OCI-LY7 (cell line): ENCODE measurements at regions of chr20 and their contacts with region 1.

Region 1: DNA sequence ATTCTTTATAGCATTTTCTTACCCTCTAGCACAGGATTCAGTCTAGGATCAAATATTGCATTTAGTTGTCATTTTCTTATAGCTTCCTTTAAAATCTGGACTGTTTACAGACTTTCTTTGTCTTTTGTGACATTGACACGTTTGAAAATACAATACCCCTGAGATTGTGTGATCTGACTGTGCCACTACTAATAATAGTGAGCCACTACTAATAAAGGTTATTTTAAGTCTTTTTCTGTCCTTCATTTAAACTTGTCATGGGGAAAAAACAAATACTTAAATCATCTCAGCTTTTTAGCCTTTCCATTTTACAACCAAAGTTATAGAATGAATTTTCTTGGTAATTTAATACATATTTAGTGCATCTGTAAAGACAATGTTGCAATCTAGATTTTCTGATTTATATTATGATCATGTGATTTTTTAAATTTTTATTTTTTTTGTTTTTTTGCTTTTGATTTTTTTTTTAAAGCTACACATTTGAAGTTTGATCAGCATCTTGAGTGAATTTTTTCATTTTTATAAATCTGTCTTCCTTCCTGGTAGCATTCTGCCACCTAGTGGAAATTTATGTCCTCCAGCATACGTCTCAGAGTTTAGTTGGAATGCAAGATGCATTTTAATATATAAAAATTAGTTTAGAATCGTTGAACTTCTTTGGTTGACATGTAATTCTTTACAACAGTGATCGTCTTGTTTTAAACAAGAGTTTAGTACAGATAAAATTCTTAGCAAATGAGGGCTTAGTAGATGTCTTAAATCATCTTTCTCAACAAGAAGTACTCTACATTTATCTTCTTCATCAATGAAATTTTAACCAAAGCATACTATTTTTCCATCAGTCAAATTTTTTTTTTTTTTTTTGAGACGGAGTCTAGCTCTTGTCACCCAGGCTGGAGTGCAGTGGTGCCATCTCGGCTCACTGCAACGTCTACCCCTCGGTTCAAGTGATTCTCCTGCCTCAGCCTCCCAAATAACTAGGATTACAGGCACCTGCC is 119.4 kb downstream of the NCOA3 start:
- DNase-seq: peak; percentile 79
- H3K4me3 ChIP-seq: no peak overlapping the region
- H3K27ac ChIP-seq: peak overlapping the region; percentile 51
- H3K4me1 ChIP-seq: peaks cover 35% of the 10 kb centered on the region
- CTCF ChIP-seq: peak; percentile 100

Region 2: GRCh38 chr20:47196091-47197081 is 424.7 kb before region 1 on chr20:
- CTCF ChIA-PET with region 1: no interaction called
- POLR2A ChIA-PET with region 1: no interaction called
- intact Hi-C with region 1: loop called (anchors 5 kb)
- DNase-seq: peak; percentile 87
- H3K4me3 ChIP-seq: peak overlapping the region; percentile 34
- H3K27ac ChIP-seq: no peak overlapping the region
- H3K4me1 ChIP-seq: peaks cover 4% of the 10 kb centered on the region
- CTCF ChIP-seq: peak; percentile 99

Region 3: GRCh38 chr20:47272893-47273590 is 348.1 kb before region 1 on chr20:
- CTCF ChIA-PET with region 1: no interaction called
- POLR2A ChIA-PET with region 1: no interaction called
- intact Hi-C with region 1: loop called (anchors 2 kb)
- DNase-seq: peak; percentile 75
- H3K4me3 ChIP-seq: no peak overlapping the region
- H3K27ac ChIP-seq: peak overlapping the region; percentile 3
- H3K4me1 ChIP-seq: peaks cover 39% of the 10 kb centered on the region
- CTCF ChIP-seq: peak; percentile 98

Region 4: DNA sequence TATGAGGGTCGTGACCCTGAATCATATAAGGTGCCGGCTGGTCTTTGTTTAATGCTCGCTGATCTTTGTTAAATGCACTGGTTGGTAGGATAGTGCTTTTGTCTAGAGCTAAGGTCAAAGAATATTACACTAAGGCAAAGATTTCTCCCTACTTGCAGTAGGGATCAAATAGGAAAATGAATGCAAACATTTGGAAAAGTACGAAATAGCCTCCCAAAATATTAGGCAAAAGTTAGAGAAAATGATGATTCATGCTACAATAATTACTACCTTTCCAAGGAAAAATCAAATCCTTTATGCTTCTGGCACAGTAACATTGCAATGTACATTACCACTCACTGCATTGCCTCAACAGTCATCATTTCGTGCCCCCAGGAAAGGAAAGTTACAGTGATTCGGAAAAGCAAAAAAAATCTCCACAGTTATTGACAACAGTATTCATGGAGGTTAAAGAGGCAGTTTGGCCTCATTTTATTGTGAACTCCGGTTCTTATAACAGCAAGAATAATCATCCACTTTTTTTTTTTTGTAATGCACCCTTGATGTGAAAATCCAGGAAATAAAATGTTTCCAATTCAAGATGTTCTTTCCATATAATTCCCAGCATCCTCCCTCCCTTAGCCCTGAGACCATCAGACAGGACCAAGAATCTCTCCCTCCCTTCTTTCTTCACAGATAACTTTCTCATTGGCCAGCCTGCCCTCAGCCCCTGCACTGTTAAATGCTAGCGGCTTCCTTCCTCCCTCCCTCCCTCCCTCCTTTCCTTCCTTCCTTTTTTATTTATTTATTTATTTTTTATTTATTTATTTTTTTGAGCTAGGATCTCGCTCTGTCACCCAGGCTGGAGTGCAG is 202.8 kb before region 1 on chr20:
- CTCF ChIA-PET with region 1: no interaction called
- POLR2A ChIA-PET with region 1: interaction called, 4 read pairs
- intact Hi-C with region 1: loop called (anchors 2 kb)
- DNase-seq: no peak
- H3K4me3 ChIP-seq: no peak overlapping the region
- H3K27ac ChIP-seq: peak overlapping the region; percentile 99
- H3K4me1 ChIP-seq: peaks cover 80% of the 10 kb centered on the region
- CTCF ChIP-seq: no peak

Region 5: GRCh38 chr20:47515843-47516242 is 105.3 kb before region 1 on chr20:
- CTCF ChIA-PET with region 1: no interaction called
- POLR2A ChIA-PET with region 1: interaction called, 10 read pairs
- intact Hi-C with region 1: no loop called
- DNase-seq: no peak
- H3K4me3 ChIP-seq: no peak overlapping the region
- H3K27ac ChIP-seq: no peak overlapping the region
- H3K4me1 ChIP-seq: peaks cover 36% of the 10 kb centered on the region
- CTCF ChIP-seq: no peak